ENCODE measurements at regions of chr7 and their contacts with region 1.

Region 1: DNA sequence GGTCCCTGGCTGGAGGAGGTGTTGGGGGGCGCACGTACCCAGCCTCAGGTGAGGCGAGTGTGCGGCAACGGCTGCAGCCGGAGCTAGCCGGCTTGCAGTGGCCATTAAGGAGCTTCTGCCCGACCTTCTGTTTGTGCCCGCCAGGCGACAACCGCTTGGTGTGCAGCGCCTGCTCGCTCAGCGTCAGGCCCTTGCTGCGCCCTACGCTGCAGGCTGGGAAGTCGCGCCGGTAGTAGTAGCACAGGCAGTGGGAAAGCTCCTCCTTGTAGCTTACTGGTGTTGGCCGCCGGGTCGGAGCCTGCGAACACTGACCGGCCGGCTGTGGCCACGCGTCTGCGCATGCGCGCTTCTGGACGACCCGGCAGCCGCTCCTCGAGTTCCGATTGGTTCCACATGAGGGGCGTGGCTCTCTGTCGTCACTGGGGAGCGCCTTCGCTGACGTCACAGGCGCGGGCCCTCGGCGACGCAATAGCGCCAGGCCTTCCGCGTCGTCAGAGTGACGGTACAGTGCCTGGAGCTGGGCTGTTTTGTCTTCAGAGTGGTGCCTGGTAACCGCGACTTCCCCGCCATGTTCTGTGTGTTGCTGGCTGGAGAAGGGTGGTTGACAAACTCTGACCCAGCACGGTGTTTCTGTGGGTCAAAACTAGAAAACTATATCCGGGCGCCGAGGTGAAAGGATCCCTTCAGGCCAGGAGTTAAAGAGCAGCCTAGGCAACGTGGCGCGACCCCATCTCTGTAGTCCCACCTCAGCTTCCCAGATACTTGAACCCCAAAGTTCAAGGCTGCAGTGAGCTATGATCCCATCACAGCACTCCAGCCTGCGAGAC is 76.3 kb upstream of the TMEM248 start:
- DNase-seq: peak; percentile 99
- ATAC-seq: peak; percentile 71
- H3K4me3 Mint-ChIP-seq: peak overlapping the region; percentile 92
- H3K27ac Mint-ChIP-seq: peak overlapping the region; percentile 99
- H3K4me1 Mint-ChIP-seq: peaks cover 37% of the 10 kb centered on the region
- H3K27me3 Mint-ChIP-seq: no peaks in the 10 kb centered on the region
- CTCF ChIP-seq: no peak

Region 2: DNA sequence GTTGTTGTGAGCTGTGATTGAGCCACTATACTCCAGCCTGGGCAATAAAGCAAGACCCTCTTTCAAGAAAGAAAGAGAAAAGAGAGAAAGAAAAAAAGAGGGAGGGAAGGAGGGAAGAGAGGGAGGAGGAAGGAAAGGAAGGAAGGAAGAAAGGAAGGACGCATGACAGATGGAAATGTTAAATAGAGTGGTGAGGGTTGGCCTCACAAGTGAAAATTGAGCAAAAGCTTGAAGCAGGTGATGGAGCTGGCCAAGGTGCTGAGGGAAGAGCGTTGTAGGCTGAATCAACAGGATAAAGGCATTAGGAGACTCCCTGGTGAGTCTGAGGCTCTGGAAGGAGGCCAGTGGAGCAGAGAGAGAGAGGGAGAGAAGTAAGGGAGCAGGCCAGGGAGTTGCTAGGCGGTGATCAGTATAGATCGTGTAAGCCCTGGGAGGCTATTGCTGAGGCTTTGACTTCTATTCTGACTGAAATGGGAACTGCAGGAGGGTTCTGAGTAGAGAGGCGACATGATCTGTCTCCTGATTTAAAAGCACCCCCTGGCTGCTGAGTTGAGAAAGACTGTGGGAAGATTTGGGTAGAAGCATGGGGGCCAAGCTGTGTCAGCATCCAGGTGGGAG is 49.8 kb after region 1 on chr7:
- CTCF ChIA-PET with region 1: interaction called, 10 read pairs
- POLR2A ChIA-PET with region 1: interaction called, 6 read pairs
- DNase-seq: peak; percentile 59
- ATAC-seq: peak; percentile 91
- H3K4me3 Mint-ChIP-seq: no peak overlapping the region
- H3K27ac Mint-ChIP-seq: peak overlapping the region; percentile 41
- H3K4me1 Mint-ChIP-seq: peaks cover 5% of the 10 kb centered on the region; the same call in 1 of the 2 replicates
- H3K27me3 Mint-ChIP-seq: no peaks in the 10 kb centered on the region
- CTCF ChIP-seq: no peak

Measured in WTC11 (cell line).